Posterior vena cava (tissue), 2 donors: ENCODE measurements at regions of chr10 and their contacts with region 1.

Region 1: GRCh38 chr10:74888962-74889663 is 62.7 kb downstream of the KAT6B start:
- DNase-seq: no peak

Region 2: DNA sequence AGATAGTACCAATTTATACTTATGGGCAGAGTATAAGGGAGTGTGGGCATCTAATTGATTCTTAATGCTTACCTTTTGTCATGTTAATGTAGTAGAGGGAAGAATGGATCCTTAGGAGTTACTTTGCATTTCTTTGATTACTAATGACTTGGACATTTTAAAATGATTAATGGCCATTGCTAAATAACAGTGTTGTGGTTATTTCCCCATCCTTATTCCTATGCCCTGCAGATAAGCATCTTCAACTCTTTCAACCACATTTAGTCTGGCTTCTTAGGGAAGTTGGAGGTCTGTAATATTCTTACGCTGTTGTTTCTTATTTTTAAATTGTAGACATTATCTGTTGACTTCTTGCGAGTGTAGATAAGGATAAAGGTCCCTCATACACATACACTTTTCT is 25.6 kb before region 1 on chr10:
- intact Hi-C with region 1: loop called in 1 of 2 experiments (anchors 1 kb)
- DNase-seq: no peak

Region 3: DNA sequence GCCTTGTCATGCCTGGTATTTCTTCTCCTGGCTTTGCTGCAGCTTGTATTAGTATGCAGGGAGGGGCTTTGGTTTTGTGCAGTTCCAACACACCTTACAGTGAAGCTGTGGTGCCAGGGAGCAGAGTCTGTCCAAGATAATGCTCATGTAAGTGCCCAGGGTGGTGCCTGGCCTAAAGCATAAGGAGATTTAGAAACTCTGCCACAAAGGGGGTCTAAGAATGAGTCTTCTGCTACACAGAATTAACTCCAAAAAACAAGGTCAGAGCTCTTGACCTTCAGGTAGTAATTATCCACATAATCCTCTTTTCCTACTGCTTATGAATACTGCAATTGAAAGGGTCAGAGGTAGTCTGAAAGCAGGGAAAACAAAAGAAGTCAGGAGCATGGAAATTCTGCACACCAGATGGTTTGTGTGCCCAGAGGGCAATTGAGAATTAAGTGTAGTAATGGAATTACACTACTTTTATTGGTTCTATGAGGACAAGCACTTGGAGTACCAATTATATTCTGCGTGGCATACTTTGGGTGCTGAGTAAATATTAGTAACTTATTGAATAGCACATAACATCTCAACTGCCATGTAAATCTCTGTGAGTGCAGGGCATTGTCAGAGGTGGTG is 58.8 kb after region 1 on chr10:
- intact Hi-C with region 1: loop called in 1 of 2 experiments (anchors 2 kb)
- DNase-seq: no peak